ENCODE measurements at regions of chr6 and their contacts with region 1.

Region 1: GRCh38 chr6:85482905-85483700 is 33.2 kb downstream of the NT5E start:
- DNase-seq: peak; percentile 71
- ATAC-seq: peak; percentile 89
- H3K4me3 ChIP-seq: no peak overlapping the region
- H3K27ac ChIP-seq: no peak overlapping the region
- H3K4me1 ChIP-seq: peaks cover 3% of the 10 kb centered on the region; the same call in 1 of the 2 replicates
- H3K27me3 ChIP-seq: no peaks in the 10 kb centered on the region
- CTCF ChIP-seq: peak; percentile 97
- POLR2A ChIP-seq: 0 out of 2 replicates have a peak, but pooled peaks have one; percentile 47
- RAD21 ChIP-seq: peak; percentile 95

Region 2: GRCh38 chr6:85283436-85283835 is 199.7 kb before region 1 on chr6:
- CTCF ChIA-PET with region 1: no interaction called
- POLR2A ChIA-PET with region 1: no interaction called
- dilution Hi-C with region 1: no loop called
- in situ Hi-C with region 1: no loop called
- intact Hi-C with region 1: no loop called
- DNase-seq: no peak
- ATAC-seq: no peak
- H3K4me3 ChIP-seq: no peak overlapping the region
- H3K27ac ChIP-seq: no peak overlapping the region
- H3K4me1 ChIP-seq: no peaks in the 10 kb centered on the region
- H3K27me3 ChIP-seq: no peaks in the 10 kb centered on the region
- CTCF ChIP-seq: no peak
- POLR2A ChIP-seq: no peak
- RAD21 ChIP-seq: no peak

Region 3: GRCh38 chr6:85354761-85355618 is 128.1 kb before region 1 on chr6:
- CTCF ChIA-PET with region 1: interaction called, 30 read pairs
- POLR2A ChIA-PET with region 1: no interaction called
- dilution Hi-C with region 1: no loop called
- in situ Hi-C with region 1: loop called (anchors 5 kb)
- intact Hi-C with region 1: loop called (anchors 1 kb)
- DNase-seq: peak; percentile 72
- ATAC-seq: peak; percentile 99
- H3K4me3 ChIP-seq: no peak overlapping the region
- H3K27ac ChIP-seq: no peak overlapping the region
- H3K4me1 ChIP-seq: peaks cover 2% of the 10 kb centered on the region
- H3K27me3 ChIP-seq: no peaks in the 10 kb centered on the region
- CTCF ChIP-seq: peak; percentile 97
- POLR2A ChIP-seq: 0 out of 2 replicates have a peak, but pooled peaks have one; percentile 28
- RAD21 ChIP-seq: peak; percentile 97

Region 4: DNA sequence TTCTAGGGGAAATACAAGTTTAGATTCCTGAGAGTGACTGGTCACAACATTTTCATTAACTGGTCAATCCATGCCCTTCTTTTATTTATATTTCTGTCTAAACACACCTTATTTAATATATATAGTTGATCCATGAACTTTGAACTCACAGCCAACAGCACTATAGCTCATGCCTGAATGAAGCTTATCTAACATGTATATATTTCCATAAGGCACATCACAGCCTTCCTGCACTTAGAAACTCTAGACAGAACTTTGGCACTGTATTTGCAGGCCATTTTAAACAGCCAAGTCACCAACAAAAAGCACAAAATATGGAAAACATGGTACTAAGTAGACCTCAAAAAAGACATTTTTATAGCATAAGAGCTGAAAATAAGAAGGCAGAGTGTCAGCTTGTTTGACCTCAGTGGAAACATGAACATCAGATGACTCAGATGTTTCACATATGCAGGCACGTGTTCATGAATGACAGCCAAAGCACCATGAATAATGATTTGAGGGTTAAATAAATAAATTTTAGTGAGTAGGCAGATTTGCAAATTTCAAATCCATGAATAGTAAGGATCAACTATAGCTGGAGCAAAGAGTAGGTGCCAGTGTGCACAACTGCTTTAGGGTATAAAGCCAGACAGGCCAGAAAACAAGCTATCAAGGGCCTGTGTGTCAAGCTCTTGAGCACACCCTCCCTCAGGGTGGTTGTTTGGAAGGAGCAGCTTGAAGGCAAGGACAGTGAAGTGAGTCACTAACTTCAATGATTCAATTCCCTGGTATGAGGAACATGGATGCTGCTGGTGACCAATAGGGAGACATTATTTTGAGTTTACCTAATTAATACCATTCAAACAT is 122.1 kb before region 1 on chr6:
- CTCF ChIA-PET with region 1: interaction called, 30 read pairs
- POLR2A ChIA-PET with region 1: no interaction called
- dilution Hi-C with region 1: no loop called
- in situ Hi-C with region 1: no loop called
- intact Hi-C with region 1: no loop called
- DNase-seq: peak; percentile 98
- ATAC-seq: peak; percentile 94
- H3K4me3 ChIP-seq: no peak overlapping the region
- H3K27ac ChIP-seq: peak overlapping the region; percentile 14
- H3K4me1 ChIP-seq: peaks cover 16% of the 10 kb centered on the region
- H3K27me3 ChIP-seq: no peaks in the 10 kb centered on the region
- CTCF ChIP-seq: no peak
- POLR2A ChIP-seq: no peak
- RAD21 ChIP-seq: peak; percentile 26; the same call in 1 of the 2 replicates

Region 5: DNA sequence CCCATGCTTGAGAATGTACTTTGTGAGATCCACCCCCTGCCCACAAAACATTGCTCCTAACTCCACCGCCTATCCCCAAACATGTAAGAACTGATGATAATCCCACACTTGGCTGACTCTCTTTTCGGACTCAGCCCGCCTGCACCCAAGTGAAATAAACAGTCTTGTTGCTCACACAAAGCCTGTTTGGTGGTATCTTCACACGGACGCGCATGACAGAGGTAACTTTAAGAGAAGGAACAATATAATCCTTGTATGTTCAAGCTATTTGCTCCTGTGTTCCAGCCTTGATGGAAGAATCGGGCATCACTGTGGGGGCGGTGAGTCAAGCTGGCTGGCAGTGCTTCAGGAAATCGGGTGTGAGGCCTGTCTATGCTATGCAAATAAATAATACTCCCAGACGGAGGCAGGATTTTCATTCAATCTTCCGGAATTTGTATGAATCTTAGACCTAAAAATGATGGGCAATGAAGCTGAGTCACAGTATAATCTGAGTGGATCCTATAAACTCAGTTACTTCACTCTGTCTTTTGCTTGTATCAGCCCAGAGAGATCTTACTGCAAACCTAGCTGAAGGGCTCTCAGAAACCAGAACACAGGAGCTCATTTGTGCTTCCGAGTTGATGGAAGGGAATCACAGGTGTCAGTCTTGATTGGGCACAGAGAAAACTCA is 78.5 kb before region 1 on chr6:
- CTCF ChIA-PET with region 1: interaction called, 8 read pairs
- POLR2A ChIA-PET with region 1: no interaction called
- dilution Hi-C with region 1: no loop called
- in situ Hi-C with region 1: no loop called
- intact Hi-C with region 1: loop called (anchors 1 kb)
- DNase-seq: peak; percentile 95
- ATAC-seq: peak; percentile 63
- H3K4me3 ChIP-seq: no peak overlapping the region; the same call in 1 of the 2 replicates
- H3K27ac ChIP-seq: peak overlapping the region; percentile 95
- H3K4me1 ChIP-seq: peaks cover 44% of the 10 kb centered on the region
- H3K27me3 ChIP-seq: no peaks in the 10 kb centered on the region
- CTCF ChIP-seq: no peak
- POLR2A ChIP-seq: peak; percentile 60; the same call in 1 of the 2 replicates
- RAD21 ChIP-seq: no peak; the same call in 1 of the 2 replicates

Region 6: DNA sequence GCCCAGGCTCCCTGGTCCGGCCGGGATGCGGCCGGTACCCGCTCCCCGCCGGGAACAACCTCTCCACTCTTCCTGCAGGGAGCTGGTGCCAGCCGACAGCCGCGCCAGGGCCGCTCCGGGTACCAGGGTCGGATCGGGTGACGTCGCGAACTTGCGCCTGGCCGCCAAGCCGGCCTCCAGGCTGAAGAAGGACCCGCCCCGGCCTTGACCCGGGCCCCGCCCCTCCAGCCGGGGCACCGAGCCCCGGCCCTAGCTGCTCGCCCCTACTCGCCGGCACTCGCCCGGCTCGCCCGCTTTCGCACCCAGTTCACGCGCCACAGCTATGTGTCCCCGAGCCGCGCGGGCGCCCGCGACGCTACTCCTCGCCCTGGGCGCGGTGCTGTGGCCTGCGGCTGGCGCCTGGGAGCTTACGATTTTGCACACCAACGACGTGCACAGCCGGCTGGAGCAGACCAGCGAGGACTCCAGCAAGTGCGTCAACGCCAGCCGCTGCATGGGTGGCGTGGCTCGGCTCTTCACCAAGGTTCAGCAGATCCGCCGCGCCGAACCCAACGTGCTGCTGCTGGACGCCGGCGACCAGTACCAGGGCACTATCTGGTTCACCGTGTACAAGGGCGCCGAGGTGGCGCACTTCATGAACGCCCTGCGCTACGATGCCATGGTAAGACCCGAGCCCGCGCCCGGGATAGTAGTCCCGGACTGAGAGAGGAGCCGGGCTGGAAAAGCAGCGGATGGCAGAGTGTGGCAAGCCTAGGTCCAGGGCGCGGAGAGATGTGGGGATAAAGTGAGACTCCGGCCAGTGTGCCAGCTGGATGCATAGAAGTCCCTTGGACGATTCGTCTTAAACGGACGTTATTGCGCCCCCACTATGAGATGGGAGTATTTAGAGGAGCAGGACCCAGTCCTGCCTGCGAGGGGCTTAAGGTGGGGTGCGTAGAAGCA is 33.0 kb before region 1 on chr6 and contains the start of gene NT5E:
- CTCF ChIA-PET with region 1: interaction called, 10 read pairs
- POLR2A ChIA-PET with region 1: interaction called, 3 read pairs
- dilution Hi-C with region 1: no loop called
- in situ Hi-C with region 1: no loop called
- intact Hi-C with region 1: loop called (anchors 1 kb)
- DNase-seq: peak; percentile 69
- ATAC-seq: peak; percentile 87
- H3K4me3 ChIP-seq: peak within 1 kb of the TSS; percentile 97
- H3K27ac ChIP-seq: peak within 1 kb of the TSS; percentile 92
- H3K4me1 ChIP-seq: peaks cover 26% of the 10 kb centered on the region
- H3K27me3 ChIP-seq: no peaks in the 10 kb centered on the region
- CTCF ChIP-seq: peak; percentile 9; the same call in 1 of the 2 replicates
- POLR2A ChIP-seq: peak; percentile 89
- RAD21 ChIP-seq: no peak
- total RNA-seq, gene NT5E: 280 and 281 TPM in 2 replicates

Region 7: GRCh38 chr6:85494554-85495536 is 11.7 kb after region 1 on chr6:
- CTCF ChIA-PET with region 1: interaction called, 12 read pairs
- POLR2A ChIA-PET with region 1: no interaction called
- dilution Hi-C with region 1: no loop called
- in situ Hi-C with region 1: no loop called
- intact Hi-C with region 1: no loop called
- DNase-seq: peak; percentile 66
- ATAC-seq: peak; percentile 31
- H3K4me3 ChIP-seq: no peak overlapping the region
- H3K27ac ChIP-seq: no peak overlapping the region
- H3K4me1 ChIP-seq: peaks cover 4% of the 10 kb centered on the region
- H3K27me3 ChIP-seq: no peaks in the 10 kb centered on the region
- CTCF ChIP-seq: no peak
- POLR2A ChIP-seq: no peak
- RAD21 ChIP-seq: no peak

Region 8: GRCh38 chr6:85516168-85516567 is 33.1 kb after region 1 on chr6:
- CTCF ChIA-PET with region 1: no interaction called
- POLR2A ChIA-PET with region 1: no interaction called
- dilution Hi-C with region 1: no loop called
- in situ Hi-C with region 1: no loop called
- intact Hi-C with region 1: loop called (anchors 2 kb)
- DNase-seq: peak; percentile 17
- ATAC-seq: 0 out of 2 replicates have a peak, but pooled peaks have one; percentile 37
- H3K4me3 ChIP-seq: no peak overlapping the region
- H3K27ac ChIP-seq: no peak overlapping the region
- H3K4me1 ChIP-seq: peaks cover 3% of the 10 kb centered on the region
- H3K27me3 ChIP-seq: no peaks in the 10 kb centered on the region
- CTCF ChIP-seq: no peak
- POLR2A ChIP-seq: no peak
- RAD21 ChIP-seq: no peak